Natural killer cell (primary cell): ENCODE measurements at regions of chr7 and their contacts with region 1.

Region 1: DNA sequence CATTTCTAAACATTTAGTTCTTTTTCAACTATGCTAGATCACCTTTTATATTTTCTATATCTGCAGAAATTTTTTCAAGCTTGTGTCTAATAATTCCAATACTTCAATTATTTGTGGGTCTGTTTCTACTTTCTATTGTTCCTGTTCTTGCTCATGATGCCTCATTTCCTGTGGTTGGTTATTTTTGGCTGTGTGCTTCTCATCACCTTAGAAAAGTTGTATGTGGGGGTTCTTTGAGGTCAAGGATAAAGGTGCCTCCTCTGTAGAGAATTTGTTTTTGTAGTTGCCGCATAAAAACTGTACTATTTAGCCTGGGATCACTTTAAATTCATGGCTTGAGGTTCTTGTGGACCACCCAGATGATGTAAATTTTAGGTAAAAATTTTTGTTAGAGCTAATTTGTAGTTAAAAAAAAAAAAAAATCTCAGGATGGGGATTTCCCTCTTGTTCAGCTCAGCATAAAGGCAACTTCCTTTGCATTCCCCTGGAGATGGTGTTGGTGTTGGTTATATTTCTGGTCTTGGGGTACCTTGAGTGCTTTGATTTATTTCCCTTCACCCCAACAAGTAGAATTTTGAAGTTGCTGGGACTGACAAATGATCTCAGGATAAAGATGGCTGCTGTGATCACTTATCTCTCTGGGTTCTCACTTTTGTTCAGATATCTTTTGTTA is 27.0 kb upstream of the JAZF1 start:
- DNase-seq: peak in 1 of 2 donors; percentile 30
- ATAC-seq: peak in 2 of 3 donors; percentile 32 to 41
- H3K4me3 ChIP-seq: no peak overlapping the region
- H3K4me3 Mint-ChIP-seq: peak overlapping the region; percentile 75
- H3K27ac ChIP-seq: peak overlapping the region; percentile 58
- H3K27ac Mint-ChIP-seq: peak overlapping the region; percentile 73 to 96
- H3K4me1 ChIP-seq: peaks cover 31% of the 10 kb centered on the region
- H3K4me1 Mint-ChIP-seq: peaks cover 73 to 77% of the 10 kb centered on the region in 2 donors
- H3K27me3 ChIP-seq: no peaks in the 10 kb centered on the region
- H3K27me3 Mint-ChIP-seq: no peaks in the 10 kb centered on the region
- CTCF ChIP-seq: no peak

Region 2: DNA sequence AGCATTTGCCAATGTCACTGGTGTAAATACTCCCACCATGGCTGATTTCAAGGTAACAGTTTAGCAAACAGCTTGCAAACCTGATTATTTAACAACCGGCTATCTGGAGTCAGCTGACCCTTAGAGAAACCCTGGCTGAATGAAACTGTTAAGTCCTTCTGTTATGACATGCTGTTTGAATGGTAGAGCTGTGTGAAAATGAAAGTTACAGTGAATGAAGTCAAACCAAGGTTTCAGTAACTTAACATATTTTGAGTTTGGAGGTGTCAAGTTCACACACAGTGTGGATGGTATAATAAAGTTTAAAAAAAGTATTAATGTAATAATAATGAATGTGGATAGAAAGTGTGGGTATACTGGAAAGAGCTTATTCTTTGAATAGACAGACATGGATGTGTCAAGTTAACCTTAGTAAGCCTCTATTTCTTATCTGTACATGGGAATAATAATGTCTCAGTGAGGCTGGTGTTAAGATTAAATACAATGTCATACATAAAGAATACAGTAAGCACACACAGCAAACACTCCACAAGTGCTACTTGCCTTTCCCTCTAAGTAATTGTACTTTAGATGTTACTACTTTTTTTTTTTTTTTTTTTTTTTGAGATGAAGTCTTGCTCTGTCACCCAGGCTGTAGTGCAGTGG is 317.3 kb before region 1 on chr7:
- intact Hi-C with region 1: loop called (anchors 10 kb)
- DNase-seq: no peak
- ATAC-seq: peak; percentile 87 to 92 (median 89)
- H3K4me3 ChIP-seq: no peak overlapping the region
- H3K4me3 Mint-ChIP-seq: no peak overlapping the region
- H3K27ac ChIP-seq: no peak overlapping the region
- H3K27ac Mint-ChIP-seq: peak overlapping the region; percentile 81 to 85
- H3K4me1 ChIP-seq: peaks cover 3% of the 10 kb centered on the region
- H3K4me1 Mint-ChIP-seq: peaks cover 30 to 66% of the 10 kb centered on the region in 2 donors
- H3K27me3 ChIP-seq: no peaks in the 10 kb centered on the region
- H3K27me3 Mint-ChIP-seq: no peaks in the 10 kb centered on the region
- CTCF ChIP-seq: no peak

Region 3: GRCh38 chr7:28069807-28070206 is 137.8 kb before region 1 on chr7:
- intact Hi-C with region 1: no loop called
- DNase-seq: no peak
- ATAC-seq: no peak
- H3K4me3 ChIP-seq: no peak overlapping the region
- H3K4me3 Mint-ChIP-seq: no peak overlapping the region
- H3K27ac ChIP-seq: no peak overlapping the region
- H3K27ac Mint-ChIP-seq: no peak overlapping the region
- H3K4me1 ChIP-seq: peaks cover 12% of the 10 kb centered on the region
- H3K4me1 Mint-ChIP-seq: peaks cover 73 to 82% of the 10 kb centered on the region in 2 donors
- H3K27me3 ChIP-seq: no peaks in the 10 kb centered on the region
- H3K27me3 Mint-ChIP-seq: no peaks in the 10 kb centered on the region
- CTCF ChIP-seq: no peak